Activated T-helper 1 cell treated with anti-CD3 and anti-CD28 coated beads, Interleukin-12 subunit alpha, Interleukin-12 subunit beta, Interleukin-2, Interleukin-4 antibody, amounts not matched to agents 30 ng/mL and 10 ng/mL and 1 ng/mL, durations not matched to agents 14 hours and 24 hours and 36 hours (primary cell): ENCODE measurements at regions of chr7 and their contacts with region 1.

Region 1: GRCh38 chr7:73738612-73739374 is at the start of gene ABHD11:
- DNase-seq: peak; percentile 95
- H3K4me3 Mint-ChIP-seq: peak within 1 kb of the TSS; percentile 94
- H3K27ac Mint-ChIP-seq: peak within 1 kb of the TSS; percentile 93
- H3K4me1 Mint-ChIP-seq: peaks cover 14% of the 10 kb centered on the region
- H3K27me3 Mint-ChIP-seq: peaks cover 2% of the 10 kb centered on the region
- total RNA-seq, gene ABHD11: 18.9 and 24.3 TPM in 2 replicates

Region 2: DNA sequence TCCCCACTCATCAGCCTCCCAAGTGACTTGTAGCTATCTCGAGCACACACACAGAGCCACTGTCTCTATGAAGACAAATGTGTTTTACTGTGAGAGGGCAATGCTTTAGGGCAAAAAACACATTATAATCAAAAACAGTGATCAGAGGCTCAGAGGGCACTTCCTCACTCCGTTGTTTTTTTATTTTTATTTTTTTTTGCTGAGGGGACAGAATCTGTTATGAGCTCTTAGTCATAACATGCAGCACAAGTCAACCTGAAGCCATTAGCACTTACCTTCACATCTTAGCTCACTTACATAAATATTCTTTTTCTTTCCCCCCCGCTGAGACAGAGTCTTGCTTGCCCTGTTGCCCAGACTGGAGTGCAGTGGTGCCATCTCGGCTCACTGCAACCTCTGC is 1484.3 kb before region 1 on chr7:
- intact Hi-C with region 1: no loop called
- DNase-seq: no peak
- H3K4me3 Mint-ChIP-seq: no peak overlapping the region
- H3K27ac Mint-ChIP-seq: no peak overlapping the region
- H3K4me1 Mint-ChIP-seq: no peaks in the 10 kb centered on the region
- H3K27me3 Mint-ChIP-seq: no peaks in the 10 kb centered on the region

Region 3: DNA sequence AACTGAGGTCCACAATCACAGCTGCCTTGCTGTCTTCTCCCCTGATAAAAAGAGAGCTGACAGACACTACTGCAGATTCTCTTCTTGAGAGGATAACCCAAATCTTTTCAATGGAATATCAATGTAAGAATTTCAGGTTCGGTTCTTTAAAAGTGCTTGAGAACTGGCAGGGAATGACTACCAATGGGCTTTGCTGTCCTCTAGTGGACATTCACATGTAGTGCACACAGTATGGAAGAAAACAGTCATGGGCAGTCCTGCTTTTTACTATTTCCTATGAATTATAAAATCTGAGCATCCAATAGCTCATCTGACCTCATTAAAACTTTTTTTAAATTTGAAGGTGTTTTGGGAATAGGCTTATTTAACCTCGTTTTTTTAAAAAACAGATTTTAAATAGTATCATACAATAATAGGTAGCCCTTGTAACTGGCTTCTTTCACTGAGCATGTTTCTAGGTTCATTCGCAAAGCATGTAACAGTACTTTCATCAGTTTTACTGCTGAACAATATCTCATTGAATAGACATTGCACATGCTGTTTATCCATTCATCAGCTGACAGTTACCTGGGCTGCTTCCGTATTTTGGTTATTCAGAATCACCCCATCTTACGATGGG is 286.9 kb before region 1 on chr7:
- intact Hi-C with region 1: loop called (anchors 5 kb)
- DNase-seq: no peak
- H3K4me3 Mint-ChIP-seq: no peak overlapping the region
- H3K27ac Mint-ChIP-seq: peak overlapping the region; percentile 16
- H3K4me1 Mint-ChIP-seq: peaks cover 21% of the 10 kb centered on the region
- H3K27me3 Mint-ChIP-seq: no peaks in the 10 kb centered on the region

Region 4: DNA sequence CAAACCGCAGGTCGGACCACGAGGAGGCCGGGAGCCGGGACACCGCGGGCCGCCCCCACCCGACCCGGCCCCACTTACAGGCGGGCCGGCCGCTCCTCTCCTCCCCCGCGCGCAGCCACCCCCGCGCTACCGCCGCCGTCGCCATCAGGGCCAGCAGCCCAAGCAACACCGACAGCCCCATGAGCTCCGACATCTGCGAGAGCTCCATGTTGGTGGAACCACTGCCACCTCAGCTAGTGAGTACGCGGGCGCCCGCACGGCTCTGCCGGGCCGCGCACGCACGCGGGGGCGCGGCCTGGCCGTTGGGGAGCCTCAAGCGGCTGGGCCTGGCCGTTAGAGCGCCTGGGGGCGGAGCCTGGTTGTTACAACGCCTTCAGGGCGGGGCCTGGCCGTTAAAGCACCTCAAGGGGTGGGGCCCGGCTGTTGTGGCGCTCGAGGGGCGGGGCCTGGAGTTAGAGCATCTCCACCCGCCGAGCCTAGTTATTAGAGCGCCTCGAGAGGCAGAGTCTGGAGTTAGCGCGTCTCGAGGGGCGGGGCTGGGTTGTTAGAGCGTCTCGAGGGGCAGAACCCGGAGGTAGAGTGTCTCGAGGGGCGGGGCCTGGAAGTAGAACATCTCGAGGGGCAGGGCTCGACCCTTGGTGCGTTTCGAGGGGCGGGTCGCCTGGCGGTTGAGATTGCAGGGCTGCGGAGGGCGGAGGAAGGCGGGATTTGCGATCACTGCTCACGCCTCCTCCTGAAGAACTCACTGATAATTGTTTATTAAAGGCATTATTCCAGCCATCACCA is 160.3 kb before region 1 on chr7 and contains the start of gene TBL2:
- intact Hi-C with region 1: loop called (anchors 1 kb)
- DNase-seq: peak; percentile 98
- H3K4me3 Mint-ChIP-seq: peak within 1 kb of the TSS; percentile 93
- H3K27ac Mint-ChIP-seq: peak within 1 kb of the TSS; percentile 96
- H3K4me1 Mint-ChIP-seq: peaks cover 28% of the 10 kb centered on the region
- H3K27me3 Mint-ChIP-seq: no peaks in the 10 kb centered on the region
- total RNA-seq, gene TBL2: 46.5 and 48.2 TPM in 2 replicates

Region 5: DNA sequence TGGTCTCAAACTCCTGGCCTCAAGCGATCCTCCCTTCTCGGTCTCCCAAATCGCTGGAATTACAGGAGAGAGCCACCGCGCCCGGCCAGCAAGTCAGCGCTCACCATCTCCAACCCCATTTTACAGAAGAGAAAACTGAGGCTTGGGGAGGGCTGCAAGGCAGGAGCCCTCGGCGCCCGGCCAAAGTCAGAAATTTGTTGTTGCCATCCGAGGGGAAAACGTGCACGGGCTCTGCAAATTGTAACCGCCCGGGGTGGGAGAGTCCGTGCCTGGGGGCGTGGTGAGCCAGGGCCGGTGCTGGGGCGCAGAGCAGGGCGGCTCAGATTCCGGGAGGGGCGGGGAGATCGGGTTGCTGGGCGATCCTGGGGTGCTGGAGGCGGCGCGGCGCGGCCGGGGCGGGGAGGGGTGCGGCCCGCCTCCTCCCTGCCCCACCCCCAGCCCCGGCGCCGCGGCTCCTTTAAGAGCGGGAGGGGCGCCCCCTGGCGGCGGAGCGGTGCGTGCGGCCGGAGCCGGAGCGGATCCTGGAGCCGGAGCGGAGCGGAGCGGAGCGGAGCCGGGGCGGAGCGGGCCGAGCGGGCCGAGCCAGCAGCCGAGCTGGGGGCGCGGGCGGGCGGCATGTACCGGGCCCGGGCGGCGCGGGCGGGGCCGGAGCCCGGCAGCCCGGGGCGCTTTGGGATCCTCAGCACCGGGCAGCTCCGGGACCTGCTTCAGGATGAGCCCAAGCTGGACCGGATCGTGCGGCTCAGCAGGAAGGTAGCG is 71.3 kb before region 1 on chr7 and contains the start of gene VPS37D:
- intact Hi-C with region 1: loop called (anchors 1 kb)
- DNase-seq: peak; percentile 91
- H3K4me3 Mint-ChIP-seq: peak within 1 kb of the TSS; percentile 78
- H3K27ac Mint-ChIP-seq: no peak within 1 kb of the TSS
- H3K4me1 Mint-ChIP-seq: peaks cover 7% of the 10 kb centered on the region
- H3K27me3 Mint-ChIP-seq: peaks cover 36% of the 10 kb centered on the region
- total RNA-seq, gene VPS37D: 0.18 and 0.34 TPM in 2 replicates

Region 6: DNA sequence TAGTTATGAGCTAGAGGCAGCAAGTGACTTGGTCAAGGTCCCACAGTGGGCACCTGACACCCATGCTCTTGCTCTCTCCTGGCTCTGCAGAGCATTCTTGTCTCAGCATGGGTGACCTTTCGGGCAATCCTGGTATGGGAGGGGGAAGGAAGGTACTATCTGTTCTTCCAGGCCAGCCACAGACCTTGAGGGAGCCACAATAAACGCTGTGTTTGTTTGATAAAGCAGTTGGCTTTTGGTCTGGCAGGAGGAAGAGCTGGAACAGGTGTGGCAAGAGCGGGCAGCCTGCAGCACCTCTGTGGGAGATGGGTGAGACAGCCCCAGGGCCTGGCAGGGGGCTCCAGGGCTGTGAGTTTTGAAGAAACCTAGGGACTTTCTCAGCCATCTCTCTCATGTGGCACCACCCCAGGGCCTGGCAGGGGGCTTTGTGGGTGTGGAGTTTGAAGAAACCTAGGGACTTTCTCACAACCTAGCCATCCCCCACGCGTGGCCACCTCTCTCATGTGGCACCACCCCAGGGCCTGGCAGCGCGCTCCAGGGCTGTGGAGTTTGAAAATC is 19.9 kb after region 1 on chr7:
- intact Hi-C with region 1: no loop called
- DNase-seq: no peak
- H3K4me3 Mint-ChIP-seq: no peak overlapping the region
- H3K27ac Mint-ChIP-seq: no peak overlapping the region
- H3K4me1 Mint-ChIP-seq: no peaks in the 10 kb centered on the region
- H3K27me3 Mint-ChIP-seq: peaks cover 5% of the 10 kb centered on the region

Region 7: DNA sequence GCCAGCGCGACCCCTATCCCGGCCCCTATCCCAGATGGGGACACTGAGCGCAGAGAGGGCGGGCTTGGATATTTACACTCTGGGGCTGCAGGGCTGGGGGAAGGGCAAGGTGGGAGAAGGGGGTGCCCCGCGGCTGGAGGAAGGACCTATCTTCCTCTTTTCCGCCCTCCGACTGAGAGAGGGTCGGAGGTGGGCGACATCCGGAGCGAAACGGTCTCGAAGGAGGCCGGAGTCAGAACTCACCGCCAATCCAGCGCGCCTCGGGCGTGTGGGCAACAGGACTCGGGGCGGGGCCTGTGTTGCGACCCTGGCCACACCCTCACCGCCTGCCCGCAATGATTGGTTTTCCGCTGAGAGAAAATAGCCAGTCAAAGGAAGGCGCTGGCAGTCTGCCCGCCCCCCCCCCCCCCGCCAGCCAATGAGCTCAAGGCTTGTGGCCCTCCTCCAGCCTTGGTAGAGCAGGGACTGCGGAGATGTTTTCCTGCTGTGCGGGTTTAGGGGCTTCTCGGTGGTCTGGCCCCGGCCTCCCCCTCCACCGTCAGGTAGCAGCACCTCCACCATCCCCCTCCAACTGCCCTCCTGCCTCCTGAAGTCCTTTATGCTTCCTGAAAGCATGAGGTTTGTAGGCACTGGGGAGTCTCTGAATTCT is 103.6 kb after region 1 on chr7 and contains the start of gene METTL27:
- intact Hi-C with region 1: loop called (anchors 2 kb)
- DNase-seq: peak; percentile 87
- H3K4me3 Mint-ChIP-seq: peak within 1 kb of the TSS; percentile 83
- H3K27ac Mint-ChIP-seq: peak within 1 kb of the TSS; percentile 73
- H3K4me1 Mint-ChIP-seq: peaks cover 10% of the 10 kb centered on the region
- H3K27me3 Mint-ChIP-seq: peaks cover 10% of the 10 kb centered on the region
- total RNA-seq, gene METTL27: 1.2 and 1.8 TPM in 2 replicates

Region 8: DNA sequence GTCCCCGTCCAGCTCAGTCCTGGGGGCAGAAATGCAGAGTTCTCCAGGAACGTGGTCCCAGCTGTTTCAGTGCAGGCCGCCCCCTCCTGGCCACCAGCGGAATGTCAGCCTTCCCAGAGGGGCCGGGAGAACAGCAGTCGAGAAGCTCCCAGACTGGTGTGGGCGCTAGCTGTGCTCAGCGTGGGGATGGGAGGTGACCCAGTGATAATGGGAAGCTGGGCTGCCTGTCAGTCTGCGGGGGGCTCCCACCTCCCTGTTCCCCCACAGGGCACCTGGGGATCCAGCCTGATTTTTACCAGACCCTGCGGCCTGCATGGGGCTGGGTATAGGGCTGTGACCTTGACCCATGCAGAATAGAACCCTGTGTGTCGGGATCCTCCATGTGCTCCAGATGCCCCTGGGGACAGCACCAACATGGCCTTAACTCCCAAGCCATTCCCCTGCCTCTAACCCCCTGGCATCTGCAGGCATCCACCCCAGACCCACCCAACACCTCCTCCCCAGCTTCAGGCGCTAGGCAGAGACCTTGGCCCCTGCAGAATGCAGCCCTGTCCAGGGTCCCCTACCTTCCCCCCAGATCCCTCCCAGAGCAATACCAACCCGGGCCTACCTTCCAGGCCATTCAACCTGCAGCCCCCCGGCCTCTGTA is 288.2 kb after region 1 on chr7:
- intact Hi-C with region 1: no loop called
- DNase-seq: peak; percentile 22
- H3K4me3 Mint-ChIP-seq: no peak overlapping the region
- H3K27ac Mint-ChIP-seq: no peak overlapping the region
- H3K4me1 Mint-ChIP-seq: peaks cover 7% of the 10 kb centered on the region
- H3K27me3 Mint-ChIP-seq: peaks cover 46% of the 10 kb centered on the region

Region 9: GRCh38 chr7:74173866-74174605 is 435.2 kb after region 1 on chr7 and contains the start of gene EIF4H:
- intact Hi-C with region 1: loop called (anchors 1 kb)
- DNase-seq: peak; percentile 93
- H3K4me3 Mint-ChIP-seq: peak within 1 kb of the TSS; percentile 94
- H3K27ac Mint-ChIP-seq: peak within 1 kb of the TSS; percentile 90
- H3K4me1 Mint-ChIP-seq: peaks cover 45% of the 10 kb centered on the region
- H3K27me3 Mint-ChIP-seq: peaks cover 3% of the 10 kb centered on the region
- total RNA-seq, gene EIF4H: 343 and 355 TPM in 2 replicates